ENCODE measurements at regions of chr20 and their contacts with region 1.

Region 1: GRCh38 chr20:815914-816606 is 17.5 kb upstream of the FAM110A start:
- DNase-seq: peak; percentile 70
- H3K4me3 ChIP-seq: no peak overlapping the region
- H3K27ac ChIP-seq: no peak overlapping the region
- H3K4me1 ChIP-seq: no peaks in the 10 kb centered on the region
- H3K27me3 ChIP-seq: no peaks in the 10 kb centered on the region
- CTCF ChIP-seq: peak; percentile 98

Region 2: GRCh38 chr20:956330-956951 is 140.4 kb after region 1 on chr20:
- CTCF ChIA-PET with region 1: interaction called, 7 read pairs
- POLR2A ChIA-PET with region 1: no interaction called
- intact Hi-C with region 1: loop called (anchors 1 kb)
- DNase-seq: peak; percentile 75
- H3K4me3 ChIP-seq: no peak overlapping the region
- H3K27ac ChIP-seq: no peak overlapping the region
- H3K4me1 ChIP-seq: no peaks in the 10 kb centered on the region
- H3K27me3 ChIP-seq: peaks cover 32% of the 10 kb centered on the region
- CTCF ChIP-seq: peak; percentile 97

Region 3: GRCh38 chr20:1072258-1072657 is 256.2 kb after region 1 on chr20:
- CTCF ChIA-PET with region 1: no interaction called
- POLR2A ChIA-PET with region 1: no interaction called
- intact Hi-C with region 1: no loop called
- DNase-seq: no peak
- H3K4me3 ChIP-seq: no peak overlapping the region
- H3K27ac ChIP-seq: no peak overlapping the region
- H3K4me1 ChIP-seq: no peaks in the 10 kb centered on the region
- H3K27me3 ChIP-seq: peaks cover 20% of the 10 kb centered on the region
- CTCF ChIP-seq: no peak

Region 4: DNA sequence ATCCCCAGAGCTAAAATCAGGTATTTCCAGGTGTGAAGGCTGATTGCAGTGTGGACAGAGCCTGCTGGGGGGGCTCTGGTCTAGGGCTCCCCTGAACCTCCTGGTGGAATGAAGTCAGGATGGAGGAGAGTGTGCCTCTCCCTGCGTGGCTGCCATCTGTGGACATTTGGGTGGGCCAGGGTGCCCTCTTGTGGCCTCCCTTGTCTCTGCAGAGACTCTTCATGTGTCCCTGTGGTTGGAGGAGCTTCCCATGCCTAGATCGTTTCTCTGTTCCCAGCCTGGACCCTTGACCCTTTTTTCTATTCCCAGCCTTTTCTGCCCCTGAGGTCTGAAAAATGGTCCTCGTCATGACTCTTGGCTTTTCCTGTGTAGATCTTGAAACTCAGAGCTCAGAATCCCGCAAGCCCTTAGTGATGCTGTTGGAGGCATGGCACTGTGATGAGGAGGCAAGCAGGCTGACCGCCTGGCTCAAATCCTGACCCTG is 292.4 kb after region 1 on chr20:
- CTCF ChIA-PET with region 1: interaction called, 12 read pairs
- POLR2A ChIA-PET with region 1: no interaction called
- intact Hi-C with region 1: loop called (anchors 1 kb)
- DNase-seq: peak; percentile 58
- H3K4me3 ChIP-seq: no peak overlapping the region
- H3K27ac ChIP-seq: no peak overlapping the region
- H3K4me1 ChIP-seq: no peaks in the 10 kb centered on the region
- H3K27me3 ChIP-seq: no peaks in the 10 kb centered on the region
- CTCF ChIP-seq: peak; percentile 82

Region 5: DNA sequence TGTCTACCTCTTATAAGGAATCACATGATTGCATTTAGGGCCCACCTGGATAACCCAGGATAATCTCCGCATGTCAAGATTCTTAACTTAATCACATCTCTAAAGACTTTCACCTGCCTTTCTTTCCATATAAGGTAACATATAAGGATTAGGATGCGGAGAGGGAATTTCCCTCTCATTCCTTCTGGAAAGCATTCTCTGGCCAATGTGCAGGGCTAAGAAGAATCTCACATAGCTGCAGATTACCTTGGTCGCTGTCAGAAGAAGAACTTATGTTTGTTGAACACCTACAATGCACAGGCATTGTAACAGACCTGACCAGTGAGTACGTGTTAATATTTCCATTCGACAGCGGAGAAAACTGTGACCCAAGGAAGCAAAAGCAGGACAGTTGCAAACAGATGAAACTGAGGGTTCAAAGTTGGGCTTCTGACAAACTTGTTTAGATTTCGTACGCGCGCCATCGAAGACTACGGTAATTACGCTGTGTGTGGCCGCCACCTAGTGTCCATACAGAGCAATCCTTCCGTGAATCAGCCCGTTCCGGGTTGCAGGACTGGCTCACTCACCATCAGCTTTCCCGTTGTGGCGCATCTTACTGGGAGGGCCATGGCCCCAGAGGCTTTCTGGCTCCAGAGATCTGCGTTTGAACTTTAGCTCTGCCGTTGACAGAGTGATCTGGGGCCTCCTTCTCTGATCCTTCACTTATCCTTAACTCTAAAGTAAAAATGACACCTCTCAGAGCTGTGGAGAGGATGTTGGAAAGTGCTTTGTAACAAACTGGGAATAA is 396.7 kb after region 1 on chr20:
- CTCF ChIA-PET with region 1: interaction called, 3 read pairs
- POLR2A ChIA-PET with region 1: no interaction called
- intact Hi-C with region 1: loop called (anchors 5 kb)
- DNase-seq: peak; percentile 84
- H3K4me3 ChIP-seq: no peak overlapping the region
- H3K27ac ChIP-seq: no peak overlapping the region
- H3K4me1 ChIP-seq: peaks cover 5% of the 10 kb centered on the region
- H3K27me3 ChIP-seq: no peaks in the 10 kb centered on the region
- CTCF ChIP-seq: peak; percentile 87

Measured in A673 (cell line).